ENCODE measurements at regions of chr9 and their contacts with region 1.

Region 1: GRCh38 chr9:120985810-120986222 is 59.2 kb upstream of the TRAF1 start:
- DNase-seq: no peak
- ATAC-seq: peak; percentile 40 to 80 (median 68)
- H3K4me3 ChIP-seq: no peak overlapping the region
- H3K27ac ChIP-seq: no peak overlapping the region
- H3K4me1 ChIP-seq: no peaks in the 10 kb centered on the region
- H3K27me3 ChIP-seq: no peaks in the 10 kb centered on the region
- CTCF ChIP-seq: peak in 3 of 4 donors; percentile 13 to 35 (median 13)

Region 2: DNA sequence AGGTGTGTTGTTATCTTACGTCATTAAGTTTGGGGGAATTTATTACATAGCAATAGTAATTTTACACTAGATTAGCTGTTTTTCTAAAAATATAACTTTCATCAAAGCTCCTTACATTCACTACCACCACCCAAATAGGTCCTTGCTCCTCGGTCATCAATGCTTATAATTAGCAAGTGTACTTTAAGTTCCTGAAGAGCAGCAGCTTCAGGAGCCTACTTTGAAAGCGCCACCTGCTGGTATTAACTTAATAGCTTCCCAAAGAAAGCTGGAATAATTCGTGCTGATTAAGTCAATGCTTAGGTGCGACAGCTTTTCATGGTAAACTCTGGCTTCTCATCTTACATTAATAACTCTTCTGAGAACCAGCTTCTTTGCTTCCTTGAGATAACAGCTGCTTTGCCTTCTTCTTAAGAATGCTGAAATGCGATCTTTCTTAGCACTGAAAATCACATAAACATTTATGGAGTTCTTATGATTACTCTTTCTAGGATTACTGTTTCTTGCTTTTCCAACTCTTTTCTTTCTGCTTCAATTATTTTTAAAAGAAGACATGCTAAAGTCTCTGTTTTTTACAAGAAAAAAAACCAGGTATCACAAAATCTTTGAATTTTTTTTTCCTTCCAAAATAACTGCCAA is 74.3 kb after region 1 on chr9:
- intact Hi-C with region 1: loop called in 1 of 3 experiments (anchors 10 kb)
- DNase-seq: peak in 2 of 6 donors; percentile 11 to 35
- ATAC-seq: peak; percentile 35 to 66 (median 62)
- H3K4me3 ChIP-seq: no peak overlapping the region
- H3K27ac ChIP-seq: no peak overlapping the region
- H3K4me1 ChIP-seq: peaks cover 0 to 9% (median 0%) of the 10 kb centered on the region in 3 donors
- H3K27me3 ChIP-seq: no peaks in the 10 kb centered on the region
- CTCF ChIP-seq: peak; percentile 44 to 69 (median 60)